ENCODE measurements at regions of chr19 and their contacts with region 1.

Region 1: GRCh38 chr19:35066691-35067563 is 25.4 kb downstream of the HPN start:
- DNase-seq: peak; percentile 55
- H3K4me3 ChIP-seq: no peak overlapping the region
- H3K27ac ChIP-seq: no peak overlapping the region
- H3K27me3 ChIP-seq: peaks cover 4% of the 10 kb centered on the region
- CTCF ChIP-seq: peak; percentile 91

Region 2: DNA sequence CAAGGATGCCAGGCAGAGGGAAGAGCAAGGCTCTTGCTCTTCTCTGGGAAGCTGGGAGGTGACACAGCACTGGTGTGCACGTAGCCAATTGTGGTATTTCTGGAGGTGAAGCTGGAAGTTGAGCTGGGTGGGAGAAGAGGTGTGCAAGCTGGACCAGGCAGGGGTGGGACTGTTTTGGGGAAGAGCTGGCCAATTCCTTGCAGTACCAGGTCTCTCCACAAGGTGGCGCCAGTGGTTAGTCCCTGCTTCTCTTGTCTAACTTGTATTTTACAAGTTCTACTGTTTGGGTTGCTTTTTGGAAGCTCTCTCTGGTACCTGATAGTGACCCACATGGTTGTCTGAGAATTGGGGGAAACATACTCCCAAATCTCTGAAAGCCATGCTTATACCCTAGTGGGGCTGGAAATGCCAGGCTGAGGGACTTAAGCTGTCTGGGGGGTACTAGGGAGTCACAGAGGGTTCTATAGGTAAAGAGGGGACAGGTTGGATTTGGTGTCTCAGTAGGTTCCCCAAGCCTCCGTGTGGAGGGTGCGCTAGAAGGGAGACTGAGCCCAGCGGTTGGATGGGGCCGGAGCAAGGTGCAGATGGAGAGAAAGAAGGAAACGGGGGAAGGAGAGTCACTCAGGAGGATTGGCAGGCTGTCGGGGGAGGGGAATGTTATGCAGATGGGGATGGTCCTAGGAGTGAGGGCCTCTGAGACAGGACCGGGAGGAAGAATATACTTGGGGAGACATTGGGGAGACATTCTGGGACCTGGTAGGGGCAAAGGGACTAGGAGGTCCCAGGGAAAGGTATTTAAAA is 22.4 kb before region 1 on chr19:
- CTCF ChIA-PET with region 1: interaction called, 23 read pairs
- POLR2A ChIA-PET with region 1: no interaction called
- DNase-seq: no peak
- H3K4me3 ChIP-seq: no peak overlapping the region
- H3K27ac ChIP-seq: no peak overlapping the region
- H3K27me3 ChIP-seq: peaks cover 7% of the 10 kb centered on the region
- CTCF ChIP-seq: peak; percentile 94

Region 3: GRCh38 chr19:35080613-35081170 is 13.8 kb after region 1 on chr19:
- CTCF ChIA-PET with region 1: interaction called, 22 read pairs
- POLR2A ChIA-PET with region 1: no interaction called
- DNase-seq: no peak
- H3K4me3 ChIP-seq: no peak overlapping the region
- H3K27ac ChIP-seq: no peak overlapping the region
- H3K27me3 ChIP-seq: no peaks in the 10 kb centered on the region
- CTCF ChIP-seq: no peak

Region 4: GRCh38 chr19:35090506-35091237 is 23.7 kb after region 1 on chr19:
- CTCF ChIA-PET with region 1: interaction called, 33 read pairs
- POLR2A ChIA-PET with region 1: no interaction called
- DNase-seq: no peak
- H3K4me3 ChIP-seq: 0 out of 2 replicates have a peak overlapping the region, but pooled peaks have one; percentile 7
- H3K27ac ChIP-seq: no peak overlapping the region
- H3K27me3 ChIP-seq: peaks cover 3% of the 10 kb centered on the region
- CTCF ChIP-seq: peak; percentile 73

Region 5: GRCh38 chr19:35098413-35099049 is 31.6 kb after region 1 on chr19:
- CTCF ChIA-PET with region 1: interaction called, 10 read pairs
- POLR2A ChIA-PET with region 1: no interaction called
- DNase-seq: no peak
- H3K4me3 ChIP-seq: no peak overlapping the region
- H3K27ac ChIP-seq: no peak overlapping the region
- H3K27me3 ChIP-seq: peaks cover 3% of the 10 kb centered on the region
- CTCF ChIP-seq: no peak

Region 6: DNA sequence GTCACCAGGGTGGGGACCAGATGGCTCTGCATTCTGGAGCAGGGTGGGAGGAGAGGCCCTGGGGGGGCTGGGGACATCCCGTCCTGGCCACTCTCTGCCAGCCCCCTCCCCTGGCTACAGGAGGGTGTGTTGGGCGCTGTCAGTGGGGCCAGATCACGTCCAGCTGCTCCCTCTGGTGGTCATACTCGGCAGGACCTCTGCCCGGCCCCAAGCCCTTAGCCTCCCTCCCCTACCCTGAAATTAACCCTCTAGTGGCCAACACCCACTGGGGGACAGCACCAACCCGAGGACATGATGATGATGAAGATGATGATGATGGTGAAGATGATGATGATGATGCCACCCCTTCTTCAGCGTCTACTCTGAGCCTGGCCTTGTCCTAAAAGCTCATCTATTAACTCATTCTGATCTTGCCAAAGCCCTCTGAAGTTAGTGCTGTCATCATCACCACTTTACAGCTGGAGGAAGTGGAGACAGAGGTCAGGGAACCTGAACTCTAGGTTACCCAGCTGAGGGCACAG is 68.5 kb after region 1 on chr19:
- CTCF ChIA-PET with region 1: interaction called, 98 read pairs
- POLR2A ChIA-PET with region 1: interaction called, 3 read pairs
- DNase-seq: no peak
- H3K4me3 ChIP-seq: no peak overlapping the region
- H3K27ac ChIP-seq: no peak overlapping the region
- H3K27me3 ChIP-seq: peaks cover 12% of the 10 kb centered on the region
- CTCF ChIP-seq: peak; percentile 89

Region 7: DNA sequence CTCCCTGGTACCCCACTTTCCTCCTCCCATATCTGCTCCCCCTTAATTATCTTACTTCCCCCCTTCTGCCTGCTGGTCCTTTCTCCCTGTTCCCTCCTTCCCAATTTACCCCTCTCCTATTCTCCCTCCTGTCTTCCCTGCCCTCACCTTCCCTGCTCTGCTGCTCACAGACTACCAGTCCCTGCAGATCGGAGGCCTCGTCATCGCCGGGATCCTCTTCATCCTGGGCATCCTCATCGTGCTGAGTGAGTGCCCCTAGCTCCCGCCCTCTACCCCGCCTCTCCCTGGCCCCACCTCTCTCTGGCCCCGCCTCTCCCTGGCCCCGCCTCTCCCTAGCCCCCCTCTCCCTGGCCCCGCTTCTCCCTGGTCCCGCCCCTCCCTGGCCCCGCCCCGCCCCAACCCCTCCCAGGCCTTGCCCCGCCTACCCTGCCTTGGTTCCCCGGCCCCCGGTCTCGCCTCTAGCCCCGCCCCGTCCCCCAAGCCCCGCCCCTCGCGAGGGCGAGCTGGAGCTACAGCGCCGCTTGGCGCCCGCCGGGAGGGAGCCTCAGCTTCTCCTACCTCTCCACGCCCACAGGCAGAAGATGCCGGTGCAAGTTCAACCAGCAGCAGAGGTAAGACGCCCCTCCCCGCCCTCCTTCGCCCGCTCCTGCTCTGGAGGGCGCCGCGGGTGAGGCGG is 74.2 kb after region 1 on chr19:
- CTCF ChIA-PET with region 1: interaction called, 98 read pairs
- POLR2A ChIA-PET with region 1: interaction called, 4 read pairs
- DNase-seq: peak; percentile 78
- H3K4me3 ChIP-seq: peak overlapping the region; percentile 29; the same call in 1 of the 2 replicates
- H3K27ac ChIP-seq: no peak overlapping the region
- H3K27me3 ChIP-seq: peaks cover 25% of the 10 kb centered on the region
- CTCF ChIP-seq: peak; percentile 45

Region 8: GRCh38 chr19:35931161-35931873 is 864.4 kb after region 1 on chr19:
- CTCF ChIA-PET with region 1: no interaction called
- POLR2A ChIA-PET with region 1: no interaction called
- DNase-seq: peak; percentile 99
- H3K4me3 ChIP-seq: peak overlapping the region; percentile 51
- H3K27ac ChIP-seq: peak overlapping the region; percentile 11
- H3K27me3 ChIP-seq: no peaks in the 10 kb centered on the region
- CTCF ChIP-seq: peak; percentile 90